ENCODE measurements at regions of chr11 and their contacts with region 1.

Region 1: GRCh38 chr11:45079943-45080719 is 66.3 kb upstream of the PRDM11 start:
- DNase-seq: peak in 4 of 10 donors; percentile 20 to 71 (median 58)
- H3K4me3 ChIP-seq: no peak overlapping the region
- H3K27ac ChIP-seq: peak overlapping the region in 36 of 59 donors; percentile 1 to 78 (median 48)
- H3K27me3 ChIP-seq: peaks cover 0 to 9% (median 0%) of the 10 kb centered on the region in 45 donors
- CTCF ChIP-seq: no peak

Region 2: GRCh38 chr11:44955015-44955738 is 125.0 kb before region 1 on chr11:
- intact Hi-C with region 1: loop called in 1 of 2 experiments (anchors 5 kb)
- DNase-seq: peak in 1 of 10 donors; percentile 27
- H3K4me3 ChIP-seq: no peak overlapping the region
- H3K27ac ChIP-seq: peak overlapping the region in 10 of 59 donors; percentile 4 to 63 (median 32)
- H3K27me3 ChIP-seq: peaks cover 0 to 49% (median 4%) of the 10 kb centered on the region in 45 donors
- CTCF ChIP-seq: no peak

Region 3: DNA sequence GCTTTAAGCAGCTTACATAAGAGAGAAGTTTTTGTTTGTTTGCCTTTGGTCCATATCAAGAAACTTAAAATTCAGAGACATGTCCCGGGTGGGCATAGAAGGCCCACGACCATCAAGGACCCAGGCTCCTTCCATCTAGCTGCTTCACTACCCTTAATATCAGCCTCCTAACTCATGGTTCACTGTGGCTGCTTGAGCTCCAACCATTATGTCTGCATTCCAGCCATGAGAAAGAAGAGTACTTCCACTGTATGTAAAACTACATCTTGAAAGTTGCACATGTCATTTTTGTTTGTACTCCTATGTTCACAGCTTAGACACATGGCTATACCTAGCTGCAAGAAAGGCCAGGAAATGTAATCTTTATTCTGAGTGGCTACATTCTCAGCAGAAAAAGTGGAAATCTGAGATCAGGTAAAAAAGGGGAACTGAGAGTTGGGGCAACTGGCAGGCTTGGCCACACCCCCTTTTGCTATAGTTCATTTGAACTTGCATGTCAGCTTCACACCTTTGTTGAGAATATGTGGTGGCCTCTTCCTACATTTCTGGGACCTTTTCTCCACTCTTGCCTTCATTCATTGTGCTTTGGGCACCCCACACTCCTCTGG is 48.1 kb before region 1 on chr11:
- intact Hi-C with region 1: loop called in 1 of 2 experiments (anchors 5 kb)
- DNase-seq: no peak
- H3K4me3 ChIP-seq: no peak overlapping the region
- H3K27ac ChIP-seq: no peak overlapping the region
- H3K27me3 ChIP-seq: no peaks in the 10 kb centered on the region
- CTCF ChIP-seq: no peak

Region 4: DNA sequence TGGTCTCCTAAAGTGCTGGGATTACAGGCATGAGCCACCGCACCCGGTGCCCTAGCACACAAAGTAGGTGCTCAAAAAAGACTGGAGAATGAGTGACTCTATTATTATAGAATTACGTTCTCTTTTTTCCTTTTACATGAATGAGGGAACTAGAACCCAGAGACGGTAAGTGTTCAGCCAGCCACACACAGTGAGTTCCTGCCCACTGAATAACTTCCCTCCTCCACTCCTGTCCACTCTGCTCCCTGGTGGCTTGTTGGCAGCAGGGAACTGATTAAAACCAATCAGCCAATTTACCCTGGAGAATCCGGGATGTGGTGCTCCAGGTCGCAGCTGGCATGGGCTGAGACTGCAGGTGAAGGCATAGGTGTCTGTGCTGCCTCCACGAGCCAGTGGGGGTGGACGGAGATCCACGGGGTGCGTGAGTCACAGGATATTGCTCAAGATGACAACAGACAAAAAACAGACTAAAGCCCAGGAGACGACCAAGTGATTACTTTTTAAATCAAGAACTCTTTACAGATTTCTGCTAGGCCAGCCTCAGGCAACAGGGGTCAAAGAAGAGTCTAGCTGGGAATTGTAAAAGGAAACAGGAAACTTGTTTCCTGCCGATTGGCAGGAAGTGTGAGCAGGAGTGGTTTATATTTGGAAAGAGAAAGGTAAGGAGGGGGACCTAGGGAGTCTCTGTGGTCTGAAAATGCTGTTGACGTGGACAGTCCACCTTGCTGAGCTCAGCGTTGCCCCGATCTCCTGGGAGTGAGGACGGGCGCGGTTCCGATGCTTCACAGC is 34.3 kb before region 1 on chr11:
- intact Hi-C with region 1: loop called in 1 of 2 experiments (anchors 5 kb)
- DNase-seq: peak in 4 of 10 donors; percentile 28 to 66 (median 41)
- H3K4me3 ChIP-seq: no peak overlapping the region
- H3K27ac ChIP-seq: peak overlapping the region in 21 of 59 donors; percentile 3 to 77 (median 50)
- H3K27me3 ChIP-seq: no peaks in the 10 kb centered on the region
- CTCF ChIP-seq: no peak